Posterior vena cava (tissue), 2 donors: ENCODE measurements at regions of chr12 and their contacts with region 1.

Region 1: DNA sequence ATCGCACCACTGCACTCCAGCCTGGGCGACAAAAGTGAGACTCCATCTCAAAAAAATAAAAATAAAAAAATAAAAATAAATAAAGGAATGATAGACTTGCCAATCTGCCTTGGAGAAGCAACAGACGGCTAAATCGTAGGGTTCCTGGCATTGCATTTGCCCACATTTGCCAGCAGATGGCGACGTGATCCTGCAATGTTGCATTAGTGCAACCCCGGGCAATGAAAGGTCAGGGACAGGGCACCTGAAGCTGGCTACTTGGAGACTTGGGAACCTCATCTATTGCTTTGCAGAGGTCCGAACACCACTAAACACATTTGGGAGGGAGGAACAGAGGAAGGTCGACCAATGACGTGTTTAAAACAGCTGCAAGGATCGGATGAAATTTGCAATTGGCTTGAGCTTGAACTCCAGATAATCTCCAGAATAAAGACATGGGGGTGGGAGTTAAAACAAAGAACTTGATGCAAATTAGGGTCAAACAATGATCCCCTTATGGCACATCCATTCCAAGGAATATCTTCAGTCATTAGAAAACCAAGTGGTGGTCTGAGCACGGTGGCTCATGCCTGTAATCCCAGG is 34.6 kb downstream of the SPRING1 start:
- DNase-seq: peak; percentile 86

Region 2: GRCh38 chr12:116880817-116881324 is 177.6 kb after region 1 on chr12:
- intact Hi-C with region 1: loop called in 1 of 2 experiments (anchors 5 kb)
- DNase-seq: no peak